PC-3 (cell line): ENCODE measurements at regions of chr11 and their contacts with region 1.

Region 1: DNA sequence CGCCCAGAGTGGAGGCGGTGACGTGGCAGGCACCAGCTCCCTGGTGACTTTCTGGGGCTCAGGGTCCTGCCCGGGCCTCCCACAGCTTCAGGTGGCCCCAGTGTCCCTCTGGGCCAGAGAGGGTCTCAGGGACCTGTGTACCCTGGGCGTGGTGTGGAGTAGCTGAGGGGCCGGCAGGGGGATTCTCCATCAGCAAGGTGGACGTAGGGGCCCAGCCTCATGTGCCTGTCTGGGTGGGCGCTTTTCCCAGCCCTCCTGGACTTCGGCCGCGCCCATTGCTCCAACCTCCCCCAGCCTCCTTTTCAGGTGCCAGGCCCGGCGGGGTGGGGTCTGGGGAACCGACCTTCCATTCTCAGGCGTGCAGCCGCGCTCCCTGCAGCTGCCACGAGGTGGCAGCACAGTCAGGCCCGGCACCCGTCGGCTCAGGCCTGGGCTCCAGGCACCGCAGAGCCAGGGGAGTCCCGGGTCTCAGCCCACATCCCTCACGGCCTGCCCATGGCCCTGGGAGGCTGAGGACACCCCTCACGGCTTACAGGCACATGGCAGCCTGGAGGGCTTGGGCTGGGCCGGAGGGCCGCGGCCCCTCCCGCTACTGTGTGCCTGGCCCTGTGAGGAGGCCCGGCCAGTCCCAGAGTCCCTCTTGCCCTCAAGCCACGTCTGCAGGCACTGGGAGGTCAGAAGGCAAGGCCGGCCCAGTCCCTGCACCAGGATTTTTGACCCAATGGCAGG is 19.9 kb upstream of the MUC5B start:
- DNase-seq: peak; percentile 76
- ATAC-seq: peak; percentile 51
- H3K4me3 ChIP-seq: no peak overlapping the region
- H3K27ac ChIP-seq: peak overlapping the region; percentile 72
- H3K4me1 ChIP-seq: peaks cover 30% of the 10 kb centered on the region
- H3K27me3 ChIP-seq: no peaks in the 10 kb centered on the region
- CTCF ChIP-seq: peak; percentile 76

Region 2: DNA sequence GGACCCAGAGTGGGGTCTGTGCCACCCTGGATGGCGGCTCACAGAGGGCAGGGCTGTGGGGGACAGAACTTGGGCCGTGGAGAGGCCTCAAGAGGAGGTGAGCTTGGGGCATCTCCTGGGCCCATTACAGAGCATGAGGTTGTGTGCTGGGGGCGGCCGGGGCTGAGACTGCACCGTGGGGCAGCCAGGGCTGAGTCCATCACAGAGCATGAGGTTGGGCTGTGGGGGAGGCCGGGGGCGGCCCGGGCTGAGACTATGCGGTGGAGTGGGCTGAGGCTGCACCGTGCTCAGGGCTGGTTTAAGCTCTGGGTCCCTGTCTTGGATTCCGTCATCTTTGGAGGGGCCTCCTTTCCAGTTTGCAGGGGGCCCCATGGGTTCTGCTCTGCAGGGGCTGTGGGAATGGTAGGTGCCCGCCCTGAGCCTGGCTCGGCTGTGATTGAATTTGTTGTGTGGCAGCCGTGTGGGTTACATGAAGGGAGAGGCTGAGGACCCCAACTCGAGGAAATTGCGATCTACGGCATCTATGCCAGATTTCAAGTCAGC is 83.3 kb before region 1 on chr11:
- CTCF ChIA-PET with region 1: no interaction called
- POLR2A ChIA-PET with region 1: no interaction called
- intact Hi-C with region 1: loop called (anchors 5 kb)
- DNase-seq: no peak
- ATAC-seq: no peak
- H3K4me3 ChIP-seq: no peak overlapping the region
- H3K27ac ChIP-seq: no peak overlapping the region
- H3K4me1 ChIP-seq: no peaks in the 10 kb centered on the region
- H3K27me3 ChIP-seq: no peaks in the 10 kb centered on the region
- CTCF ChIP-seq: no peak

Region 3: DNA sequence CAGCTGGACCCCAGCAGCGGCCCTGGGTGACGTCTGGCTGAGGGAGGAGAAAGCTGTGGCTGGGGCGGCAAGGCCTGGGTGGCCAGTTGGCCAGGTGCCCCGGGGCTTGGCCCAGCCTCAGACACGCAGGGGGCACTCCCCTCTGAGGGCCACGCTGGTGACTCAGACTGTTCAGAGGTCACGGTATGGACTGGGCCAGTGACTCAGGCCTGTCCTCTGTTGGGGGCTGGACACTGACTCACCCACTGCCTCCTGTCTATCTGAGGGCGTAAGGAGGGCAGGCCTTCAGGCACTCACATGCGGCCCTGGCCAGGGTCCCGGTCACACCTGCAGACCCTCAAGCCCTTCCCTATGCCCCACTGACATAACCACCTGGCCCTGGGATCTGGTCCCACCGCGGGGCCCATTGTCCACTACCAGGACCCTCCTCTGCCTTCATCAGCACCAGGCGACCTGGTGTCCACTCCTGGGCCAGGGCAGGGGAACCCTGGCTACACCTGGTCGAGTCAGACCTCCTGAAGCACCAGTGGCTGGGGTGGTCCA is 48.9 kb before region 1 on chr11:
- CTCF ChIA-PET with region 1: interaction called, 3 read pairs
- POLR2A ChIA-PET with region 1: no interaction called
- intact Hi-C with region 1: loop called (anchors 5 kb)
- DNase-seq: peak; percentile 89
- ATAC-seq: peak; percentile 73
- H3K4me3 ChIP-seq: no peak overlapping the region
- H3K27ac ChIP-seq: peak overlapping the region; percentile 99
- H3K4me1 ChIP-seq: peaks cover 43% of the 10 kb centered on the region
- H3K27me3 ChIP-seq: no peaks in the 10 kb centered on the region
- CTCF ChIP-seq: no peak

Region 4: DNA sequence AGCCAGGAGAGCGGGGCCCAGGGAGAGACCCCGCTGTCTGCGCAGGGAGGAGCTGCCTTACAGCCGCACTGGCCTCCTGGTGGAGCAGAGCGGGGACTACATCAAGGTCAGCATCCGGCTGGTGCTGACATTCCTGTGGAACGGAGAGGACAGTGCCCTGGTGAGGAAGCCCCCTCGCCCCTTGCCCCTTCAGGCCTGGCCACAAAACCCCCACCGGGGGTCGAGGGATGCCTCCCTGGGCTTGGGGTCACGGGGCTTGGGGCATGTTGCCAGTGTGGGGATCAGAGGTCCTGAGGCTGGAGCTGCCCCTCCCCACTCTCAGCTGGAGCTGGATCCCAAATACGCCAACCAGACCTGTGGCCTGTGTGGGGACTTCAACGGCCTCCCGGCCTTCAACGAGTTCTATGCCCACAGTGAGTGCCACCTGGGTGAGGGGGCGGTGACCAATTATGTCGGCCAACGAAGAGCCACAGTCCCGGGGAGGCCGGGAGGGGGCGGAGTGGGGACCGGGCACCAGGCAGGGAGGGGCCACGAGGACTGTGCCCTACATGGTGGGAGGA is 24.1 kb after region 1 on chr11:
- CTCF ChIA-PET with region 1: no interaction called
- POLR2A ChIA-PET with region 1: interaction called, 10 read pairs
- intact Hi-C with region 1: loop called (anchors 1 kb)
- DNase-seq: no peak
- ATAC-seq: no peak
- H3K4me3 ChIP-seq: no peak overlapping the region
- H3K27ac ChIP-seq: no peak overlapping the region
- H3K4me1 ChIP-seq: peaks cover 16% of the 10 kb centered on the region; the same call in 1 of the 2 replicates
- H3K27me3 ChIP-seq: no peaks in the 10 kb centered on the region
- CTCF ChIP-seq: no peak

Region 5: GRCh38 chr11:1262172-1263006 is 59.4 kb after region 1 on chr11:
- CTCF ChIA-PET with region 1: no interaction called
- POLR2A ChIA-PET with region 1: no interaction called
- intact Hi-C with region 1: loop called (anchors 5 kb)
- DNase-seq: peak; percentile 83
- ATAC-seq: peak; percentile 78
- H3K4me3 ChIP-seq: peak overlapping the region; percentile 58
- H3K27ac ChIP-seq: peak overlapping the region; percentile 44
- H3K4me1 ChIP-seq: peaks cover 13% of the 10 kb centered on the region
- H3K27me3 ChIP-seq: no peaks in the 10 kb centered on the region
- CTCF ChIP-seq: no peak

Region 6: GRCh38 chr11:1317432-1317831 is 114.5 kb after region 1 on chr11:
- CTCF ChIA-PET with region 1: no interaction called
- POLR2A ChIA-PET with region 1: no interaction called
- intact Hi-C with region 1: no loop called
- DNase-seq: no peak
- ATAC-seq: no peak
- H3K4me3 ChIP-seq: no peak overlapping the region
- H3K27ac ChIP-seq: no peak overlapping the region
- H3K4me1 ChIP-seq: no peaks in the 10 kb centered on the region
- H3K27me3 ChIP-seq: no peaks in the 10 kb centered on the region
- CTCF ChIP-seq: no peak

Region 7: DNA sequence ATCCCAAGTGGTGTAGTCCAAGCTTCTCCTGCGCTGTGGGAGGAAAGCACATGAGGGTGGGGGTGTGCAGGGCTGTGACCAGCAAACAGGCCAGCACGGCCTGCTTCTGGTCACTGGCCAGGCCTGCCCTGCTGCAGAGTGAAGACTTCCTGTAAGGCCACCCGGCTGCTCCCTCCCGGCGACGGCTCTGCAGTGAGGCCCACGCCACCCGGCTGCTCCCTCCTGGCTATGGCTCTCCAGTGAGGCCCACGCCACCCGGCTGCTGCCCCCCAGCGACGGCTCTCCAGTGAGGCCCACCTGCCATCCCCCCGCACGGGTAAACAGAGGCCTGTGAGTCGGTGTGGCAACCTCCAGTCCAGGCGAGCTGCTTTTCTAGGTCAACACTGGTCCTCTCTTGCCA is 155.3 kb after region 1 on chr11:
- CTCF ChIA-PET with region 1: no interaction called
- POLR2A ChIA-PET with region 1: no interaction called
- intact Hi-C with region 1: no loop called
- DNase-seq: no peak
- ATAC-seq: no peak
- H3K4me3 ChIP-seq: no peak overlapping the region
- H3K27ac ChIP-seq: no peak overlapping the region
- H3K4me1 ChIP-seq: no peaks in the 10 kb centered on the region
- H3K27me3 ChIP-seq: peaks cover 11% of the 10 kb centered on the region; the same call in 1 of the 2 replicates
- CTCF ChIP-seq: no peak

Region 8: GRCh38 chr11:1422481-1422880 is 219.5 kb after region 1 on chr11:
- CTCF ChIA-PET with region 1: no interaction called
- POLR2A ChIA-PET with region 1: no interaction called
- intact Hi-C with region 1: no loop called
- DNase-seq: peak; percentile 7
- ATAC-seq: peak; percentile 64
- H3K4me3 ChIP-seq: no peak overlapping the region
- H3K27ac ChIP-seq: no peak overlapping the region
- H3K4me1 ChIP-seq: no peaks in the 10 kb centered on the region
- H3K27me3 ChIP-seq: no peaks in the 10 kb centered on the region
- CTCF ChIP-seq: no peak